AG04449 (cell line): ENCODE measurements at regions of chr20 and their contacts with region 1.

Region 1: DNA sequence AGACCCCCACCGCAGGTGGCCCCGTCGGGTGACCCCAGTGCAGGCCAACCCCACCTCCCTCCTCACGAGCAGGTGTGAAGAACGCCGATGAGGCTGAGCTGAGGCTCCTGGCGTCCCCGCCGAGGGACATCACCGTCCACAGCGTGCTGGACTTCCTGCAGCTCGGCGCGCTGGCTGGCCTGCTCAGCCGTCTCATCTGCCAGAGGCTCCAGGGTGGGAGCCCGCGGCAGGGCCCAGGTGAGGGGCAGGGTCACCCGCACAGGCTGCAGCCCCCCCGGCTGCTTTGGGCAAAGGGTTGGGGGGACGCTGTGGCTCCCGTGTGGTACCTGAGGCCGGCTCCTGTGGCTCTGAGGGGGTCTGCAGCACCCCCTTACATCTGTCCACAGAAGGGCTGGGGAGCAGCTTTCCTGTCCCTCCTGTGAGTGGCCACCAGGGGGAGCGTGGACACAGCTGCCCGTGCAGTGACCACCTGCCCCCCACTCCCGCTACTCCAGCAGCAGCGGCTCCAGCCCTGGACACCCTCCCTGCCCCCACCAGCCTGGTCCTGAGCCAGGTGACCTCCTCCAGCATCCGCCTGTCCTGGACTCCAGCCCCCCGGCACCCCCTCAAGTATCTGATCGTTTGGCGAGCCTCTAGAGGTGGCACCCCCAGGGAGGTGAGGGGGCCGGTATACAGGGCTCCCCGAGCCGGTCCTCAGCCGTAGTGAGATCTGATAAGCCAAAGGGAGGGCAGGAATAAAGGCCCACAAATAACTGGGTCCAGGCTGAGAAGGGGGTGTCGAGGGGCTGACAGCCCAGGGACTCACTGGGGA is 16.5 kb downstream of the COL20A1 start:
- DNase-seq: no peak
- H3K4me3 ChIP-seq: no peak overlapping the region
- CTCF ChIP-seq: peak; percentile 96

Region 2: DNA sequence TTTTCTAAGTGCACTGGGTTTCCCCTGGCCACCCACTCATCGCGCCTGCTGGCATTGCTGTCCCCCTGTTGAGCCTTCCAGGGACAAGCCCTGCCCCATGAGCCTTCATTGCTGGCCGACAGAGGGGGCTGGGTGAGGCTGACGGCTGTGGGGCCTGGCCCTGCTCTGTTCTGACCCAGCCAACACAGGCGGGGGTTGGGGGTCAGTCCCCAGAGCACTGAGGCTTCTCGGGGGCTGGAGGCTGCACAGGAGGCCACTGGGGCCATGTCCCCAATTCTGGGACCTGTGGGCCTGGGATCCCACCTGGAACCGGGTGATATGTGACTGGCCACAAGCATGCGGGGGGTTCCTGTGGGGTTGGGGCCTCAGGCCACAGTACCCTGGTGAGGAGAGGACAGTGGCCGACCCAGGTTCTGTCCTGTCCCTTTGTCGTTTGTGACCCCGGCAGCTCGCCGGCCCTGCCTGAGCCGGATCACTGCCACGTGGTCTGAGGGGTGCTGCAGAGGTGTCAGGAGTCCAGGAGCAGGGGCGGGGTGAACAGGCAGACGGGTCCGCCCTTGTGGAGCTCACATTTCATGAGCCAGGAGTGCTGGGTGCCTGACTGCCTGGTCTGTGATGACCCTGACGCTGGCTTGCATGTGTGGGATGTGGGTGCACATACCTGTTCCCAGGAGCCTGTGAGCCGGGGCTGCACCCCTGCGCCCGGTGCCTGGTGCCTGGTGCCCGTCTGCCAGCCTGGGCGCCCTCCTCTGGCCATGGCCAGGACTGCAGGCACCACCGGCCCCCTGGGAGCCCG is 18.6 kb before region 1 on chr20:
- CTCF ChIA-PET with region 1: interaction called, 41 read pairs
- POLR2A ChIA-PET with region 1: no interaction called
- DNase-seq: no peak
- H3K4me3 ChIP-seq: no peak overlapping the region
- CTCF ChIP-seq: peak; percentile 92

Region 3: GRCh38 chr20:63298731-63299312 is 10.6 kb before region 1 on chr20:
- CTCF ChIA-PET with region 1: interaction called, 41 read pairs
- POLR2A ChIA-PET with region 1: no interaction called
- DNase-seq: no peak
- H3K4me3 ChIP-seq: no peak overlapping the region
- CTCF ChIP-seq: no peak

Region 4: GRCh38 chr20:63330940-63331339 is 21.5 kb after region 1 on chr20:
- CTCF ChIA-PET with region 1: interaction called, 11 read pairs
- POLR2A ChIA-PET with region 1: no interaction called
- DNase-seq: no peak
- H3K4me3 ChIP-seq: no peak overlapping the region
- CTCF ChIP-seq: no peak

Region 5: DNA sequence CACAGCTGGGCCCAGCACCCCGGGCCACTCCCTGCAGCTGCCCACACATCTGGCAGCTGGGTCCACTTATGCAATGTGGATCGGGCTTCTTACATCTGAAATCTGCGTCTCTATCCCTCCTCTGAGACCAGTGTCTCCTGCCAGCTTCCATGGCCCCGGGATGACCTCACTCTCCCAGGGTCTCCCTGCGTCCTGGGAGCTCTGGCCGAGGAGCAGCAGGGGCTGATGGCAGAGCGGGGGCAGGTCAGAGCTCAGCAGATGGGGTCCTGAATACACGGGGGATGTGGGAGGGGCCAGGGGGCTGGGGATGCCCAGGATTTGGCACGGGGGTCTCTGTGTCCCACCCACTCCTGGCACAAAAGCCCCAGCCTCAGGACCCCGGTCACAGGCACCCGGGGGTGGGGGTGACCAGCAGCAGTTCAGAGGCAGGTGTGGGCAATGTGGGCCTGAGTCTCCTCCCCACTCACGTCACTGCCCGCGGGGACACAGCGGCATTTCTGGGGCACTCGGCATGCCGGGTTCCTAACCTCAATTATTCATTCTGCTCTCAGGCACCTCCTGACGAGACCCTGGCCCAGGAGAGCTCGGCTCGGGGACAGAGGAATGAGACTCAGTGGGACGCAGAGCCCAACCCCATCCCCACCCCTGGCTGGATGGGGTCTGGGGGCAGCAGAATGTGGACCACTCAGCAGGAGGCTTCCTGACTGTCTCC is 35.3 kb after region 1 on chr20:
- CTCF ChIA-PET with region 1: no interaction called
- POLR2A ChIA-PET with region 1: no interaction called
- DNase-seq: no peak
- H3K4me3 ChIP-seq: no peak overlapping the region
- CTCF ChIP-seq: no peak

Region 6: DNA sequence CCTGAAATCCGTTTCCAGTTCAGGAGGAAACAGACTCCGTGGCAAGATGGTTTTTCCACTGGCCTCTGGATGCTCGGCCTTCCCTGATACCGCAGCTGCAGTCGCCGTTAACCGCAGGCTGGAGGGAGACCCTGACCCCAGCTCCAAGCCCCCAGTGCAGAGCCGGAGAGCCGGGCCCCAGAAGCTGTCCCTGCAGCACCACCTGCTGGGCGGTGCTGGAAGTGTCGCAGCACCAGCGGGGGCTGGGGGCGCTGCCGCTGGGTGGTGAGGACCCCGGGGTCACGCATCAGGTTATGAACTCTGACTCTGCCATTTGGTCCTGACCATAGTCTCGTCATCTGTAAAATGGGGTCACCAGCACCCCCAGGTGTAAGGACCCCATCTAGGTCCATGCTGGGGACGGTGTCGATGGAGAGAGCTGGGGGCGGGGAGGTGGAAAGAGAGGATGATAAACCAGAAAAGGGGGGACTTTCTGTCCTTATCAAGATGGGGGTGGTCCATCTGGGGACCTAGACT is 72.4 kb after region 1 on chr20:
- CTCF ChIA-PET with region 1: interaction called, 79 read pairs
- POLR2A ChIA-PET with region 1: no interaction called
- DNase-seq: no peak
- H3K4me3 ChIP-seq: no peak overlapping the region
- CTCF ChIP-seq: peak; percentile 94